K562 (cell line): ENCODE measurements at regions of chr4 and their contacts with region 1.

Region 1: GRCh38 chr4:167868163-167868562 is 224.2 kb upstream of the ANXA10 start:
- DNase-seq: no peak
- ATAC-seq: no peak
- H3K4me3 ChIP-seq: no peak overlapping the region
- H3K27ac ChIP-seq: no peak overlapping the region
- H3K4me1 ChIP-seq: no peaks in the 10 kb centered on the region
- H3K27me3 ChIP-seq: no peaks in the 10 kb centered on the region
- CTCF ChIP-seq: no peak
- EP300 ChIP-seq: no peak
- POLR2A ChIP-seq: no peak
- RAD21 ChIP-seq: no peak

Region 2: GRCh38 chr4:166064721-166065120 is 1803.4 kb before region 1 on chr4:
- CTCF ChIA-PET with region 1: no interaction called
- POLR2A ChIA-PET with region 1: no interaction called
- in situ Hi-C with region 1: no loop called
- intact Hi-C with region 1: loop called (anchors 5 kb)
- DNase-seq: no peak
- ATAC-seq: no peak
- H3K4me3 ChIP-seq: no peak overlapping the region
- H3K27ac ChIP-seq: no peak overlapping the region
- H3K4me1 ChIP-seq: no peaks in the 10 kb centered on the region
- H3K27me3 ChIP-seq: no peaks in the 10 kb centered on the region
- CTCF ChIP-seq: no peak
- EP300 ChIP-seq: no peak
- POLR2A ChIP-seq: no peak
- RAD21 ChIP-seq: no peak